ENCODE measurements at regions of chr12 and their contacts with region 1.

Region 1: GRCh38 chr12:5808981-5809380 is 136.1 kb downstream of the ANO2 start:
- DNase-seq: no peak
- H3K4me3 ChIP-seq: no peak overlapping the region
- H3K27ac ChIP-seq: no peak overlapping the region
- H3K4me1 ChIP-seq: no peaks in the 10 kb centered on the region
- H3K27me3 ChIP-seq: peaks cover 0 to 44% (median 0%) of the 10 kb centered on the region in 4 donors
- CTCF ChIP-seq: no peak
- EP300 ChIP-seq: no peak
- POLR2A ChIP-seq: no peak

Region 2: GRCh38 chr12:5748027-5748426 is 61.0 kb before region 1 on chr12:
- intact Hi-C with region 1: loop called (anchors 2 kb)
- DNase-seq: no peak
- H3K4me3 ChIP-seq: no peak overlapping the region
- H3K27ac ChIP-seq: no peak overlapping the region
- H3K4me1 ChIP-seq: peaks cover 0 to 7% (median 0%) of the 10 kb centered on the region in 4 donors
- H3K27me3 ChIP-seq: no peaks in the 10 kb centered on the region
- CTCF ChIP-seq: no peak
- EP300 ChIP-seq: no peak
- POLR2A ChIP-seq: no peak